Activated B cell treated with CpG ODN at 0.5 μM for 24 hours (primary cell): ENCODE measurements at regions of chr18 and their contacts with region 1.

Region 1: DNA sequence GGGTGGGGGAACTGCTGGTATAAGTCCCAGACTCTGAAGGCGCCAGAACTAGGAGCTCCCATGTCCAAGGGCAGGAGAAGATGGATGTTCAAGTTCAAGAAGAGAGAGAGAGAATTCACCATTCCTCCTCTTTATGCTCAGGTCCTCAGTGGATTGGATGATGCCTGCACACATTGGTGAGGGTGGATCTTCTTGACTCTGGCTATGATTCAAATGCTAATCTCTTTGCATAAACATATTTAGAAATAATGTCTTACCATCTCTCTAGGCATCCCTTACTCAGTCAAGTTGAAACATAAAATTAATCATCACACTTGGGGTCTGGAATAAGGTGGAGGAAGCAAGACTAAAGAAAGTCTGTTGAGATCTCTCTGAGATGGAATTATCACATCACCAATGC is 210.6 kb upstream of the CHST9 start:
- DNase-seq: no peak
- ATAC-seq: no peak
- H3K4me3 Mint-ChIP-seq: no peak overlapping the region
- H3K27ac Mint-ChIP-seq: no peak overlapping the region
- H3K4me1 Mint-ChIP-seq: no peaks in the 10 kb centered on the region
- H3K27me3 Mint-ChIP-seq: no peaks in the 10 kb centered on the region
- CTCF ChIP-seq: no peak

Region 2: DNA sequence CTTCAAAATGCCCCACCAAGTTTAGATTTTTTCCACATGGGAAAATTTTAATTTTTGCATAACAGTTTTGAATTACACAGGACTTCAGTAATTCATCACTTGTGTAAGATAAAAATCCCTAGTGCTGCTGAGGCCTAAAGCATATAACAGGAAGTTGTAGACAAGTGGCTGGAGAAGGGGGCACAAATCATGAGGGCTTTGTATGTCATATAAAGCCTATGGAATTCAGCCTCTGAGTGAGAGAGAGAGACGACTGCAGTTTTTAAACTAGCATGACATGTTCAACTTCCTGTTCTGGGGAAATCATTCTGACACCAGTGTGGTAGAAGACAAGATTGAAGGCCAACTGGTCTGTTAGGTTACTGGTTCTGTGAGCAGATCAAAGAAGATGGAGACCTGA is 23.4 kb before region 1 on chr18:
- CTCF ChIA-PET with region 1: no interaction called
- POLR2A ChIA-PET with region 1: no interaction called
- intact Hi-C with region 1: loop called (anchors 2 kb)
- DNase-seq: no peak
- ATAC-seq: no peak
- H3K4me3 Mint-ChIP-seq: no peak overlapping the region
- H3K27ac Mint-ChIP-seq: no peak overlapping the region
- H3K4me1 Mint-ChIP-seq: no peaks in the 10 kb centered on the region
- H3K27me3 Mint-ChIP-seq: no peaks in the 10 kb centered on the region
- CTCF ChIP-seq: no peak